H1 (cell line): ENCODE measurements at regions of chr16 and their contacts with region 1.

Region 1: DNA sequence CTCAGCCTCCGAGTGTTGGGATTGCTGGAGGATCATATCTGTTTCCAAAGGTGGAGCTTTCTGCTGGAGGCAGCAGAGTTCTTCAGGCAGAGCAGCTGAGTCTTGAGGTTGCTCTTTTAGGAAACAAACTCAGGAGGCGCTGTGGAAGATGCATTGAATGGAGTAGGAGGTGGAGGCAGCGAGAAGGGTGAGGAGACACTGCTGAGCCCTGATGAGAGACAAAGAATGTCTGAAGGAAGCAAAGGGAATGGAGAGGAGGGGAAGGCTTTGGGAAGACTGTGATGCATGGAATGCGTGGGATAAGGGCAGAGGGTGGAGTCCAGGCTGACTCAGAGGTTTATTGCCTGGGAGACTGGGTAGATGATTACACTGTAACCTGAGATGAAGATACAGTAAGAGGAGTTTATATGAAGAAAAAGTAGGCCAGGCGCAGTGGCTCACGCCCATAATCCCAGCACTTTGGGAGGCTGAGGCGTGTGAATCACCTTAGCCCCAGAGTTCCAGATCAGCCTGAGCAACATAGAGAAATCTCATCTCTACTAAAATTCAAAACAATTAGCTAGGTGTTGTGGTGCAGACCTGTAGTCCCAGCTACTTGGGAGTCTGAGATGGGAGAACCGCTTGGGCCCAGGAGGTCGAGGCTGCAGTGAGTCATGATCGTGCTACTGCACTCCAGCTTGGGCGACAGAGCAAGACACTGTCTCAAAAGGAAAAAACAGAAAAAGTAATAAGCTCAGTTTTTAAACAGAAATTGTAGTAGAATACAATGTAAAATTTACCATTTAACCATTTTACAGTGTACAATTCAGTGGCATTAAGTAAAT is 17.8 kb upstream of the TMEM219 start:
- DNase-seq: no peak
- H3K4me3 ChIP-seq: no peak overlapping the region
- H3K27ac ChIP-seq: no peak overlapping the region
- H3K4me1 ChIP-seq: no peaks in the 10 kb centered on the region; a peak in 1 of 7 replicates
- H3K27me3 ChIP-seq: peaks cover 0 to 3% (median 0%) of the 10 kb centered on the region in 4 experiments; a peak in 1 of 7 replicates
- CTCF ChIP-seq: peak; percentile 22 to 67 (median 51)
- EP300 ChIP-seq: no peak
- POLR2A ChIP-seq: no peak
- RAD21 ChIP-seq: peak; percentile 25 to 31; a peak in 2 of 4 replicates

Region 2: DNA sequence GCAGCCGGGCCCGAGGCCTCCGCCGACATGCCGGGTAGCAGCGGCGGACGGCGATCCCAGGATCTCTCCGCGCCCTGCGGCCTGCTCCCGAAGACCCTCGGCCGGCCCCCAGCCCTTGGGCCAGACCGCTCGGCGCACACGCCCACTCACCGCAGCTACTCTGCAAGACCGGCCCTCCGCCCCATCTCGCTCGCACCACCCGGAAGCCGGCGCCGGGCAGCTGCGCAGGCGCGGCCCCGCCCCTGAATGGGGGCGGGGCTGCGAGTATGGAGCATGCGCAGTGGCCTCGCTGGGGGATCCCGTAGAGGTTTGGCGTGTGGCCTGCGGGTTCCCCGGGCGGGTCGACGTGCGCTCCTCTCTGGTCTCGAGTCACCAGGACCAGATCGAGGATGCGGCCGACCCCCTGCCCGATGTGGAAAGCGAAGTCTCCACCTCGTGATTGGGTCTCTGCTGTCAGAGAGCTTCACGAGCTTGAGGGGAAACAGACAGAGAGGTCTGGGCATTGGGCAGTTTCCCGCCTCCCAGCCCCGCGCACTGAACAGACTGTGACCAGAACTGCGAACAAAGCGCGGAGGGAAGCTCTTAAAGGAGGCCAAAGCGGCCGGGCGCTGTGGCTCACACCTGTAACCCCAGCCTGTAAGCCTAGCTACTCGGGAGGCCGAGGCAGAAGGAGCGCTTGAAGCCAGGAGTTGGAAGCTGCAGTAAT is 17.9 kb before region 1 on chr16 and contains the start of gene KCTD13:
- CTCF ChIA-PET with region 1: interaction called, 11 read pairs
- POLR2A ChIA-PET with region 1: interaction called, 19 read pairs
- DNase-seq: peak; percentile 62 to 98
- H3K4me3 ChIP-seq: peak within 1 kb of the TSS; percentile 62 to 89 (median 85)
- H3K27ac ChIP-seq: peak within 1 kb of the TSS; percentile 86
- H3K4me1 ChIP-seq: peaks cover 0 to 8% (median 0%) of the 10 kb centered on the region in 4 experiments; a peak in 2 of 7 replicates
- H3K27me3 ChIP-seq: no peaks in the 10 kb centered on the region
- CTCF ChIP-seq: 0 out of 4 replicates have a peak, but pooled peaks of 1 of the 3 experiments have one; percentile 2
- EP300 ChIP-seq: no peak
- POLR2A ChIP-seq: peak; percentile 62 to 90
- RAD21 ChIP-seq: no peak
- total RNA-seq, gene KCTD13: 10.8 and 12.3 TPM in 2 replicates

Region 3: GRCh38 chr16:29961479-29962343 is 17.7 kb after region 1 on chr16 and contains the start of gene TMEM219:
- CTCF ChIA-PET with region 1: interaction called, 16 read pairs
- POLR2A ChIA-PET with region 1: interaction called, 4 read pairs
- DNase-seq: peak in 1 of 2 experiments; percentile 96
- H3K4me3 ChIP-seq: peak within 1 kb of the TSS; percentile 51 to 81 (median 72)
- H3K27ac ChIP-seq: peak within 1 kb of the TSS; percentile 91
- H3K4me1 ChIP-seq: peaks cover 0 to 5% (median 3%) of the 10 kb centered on the region in 4 experiments; a peak in 5 of 7 replicates
- H3K27me3 ChIP-seq: peaks cover 0 to 2% (median 0%) of the 10 kb centered on the region in 4 experiments; a peak in 1 of 7 replicates
- CTCF ChIP-seq: no peak
- EP300 ChIP-seq: peak in 1 of 2 experiments; percentile 83; a peak in 1 of 3 replicates
- POLR2A ChIP-seq: peak; percentile 35 to 60
- RAD21 ChIP-seq: peak in 1 of 2 experiments; percentile 0; a peak in 1 of 4 replicates
- total RNA-seq, gene TMEM219: 60.2 and 64.9 TPM in 2 replicates

Region 4: GRCh38 chr16:30005341-30006094 is 61.5 kb after region 1 on chr16:
- CTCF ChIA-PET with region 1: interaction called, 11 read pairs
- POLR2A ChIA-PET with region 1: no interaction called
- DNase-seq: no peak
- H3K4me3 ChIP-seq: no peak overlapping the region
- H3K27ac ChIP-seq: no peak overlapping the region
- H3K4me1 ChIP-seq: peaks cover 0 to 22% (median 11%) of the 10 kb centered on the region in 4 experiments; a peak in 6 of 7 replicates
- H3K27me3 ChIP-seq: peaks cover 0 to 13% (median 8%) of the 10 kb centered on the region in 4 experiments; a peak in 4 of 7 replicates
- CTCF ChIP-seq: peak in 2 of 3 experiments; percentile 60 to 71; a peak in 3 of 4 replicates
- EP300 ChIP-seq: no peak
- POLR2A ChIP-seq: no peak
- RAD21 ChIP-seq: peak; percentile 29 to 50; a peak in 3 of 4 replicates